Activated CD8-positive, alpha-beta memory T cell treated with anti-CD3 and anti-CD28 coated beads, Interleukin-2, amount 10 ng/mL, durations not matched to agents 7 days and 5 days (primary cell): ENCODE measurements at regions of chr19 and their contacts with region 1.

Region 1: GRCh38 chr19:14366498-14366915 is 14.7 kb upstream of the ADGRE5 start:
- DNase-seq: peak; percentile 93
- ATAC-seq: peak; percentile 37
- H3K4me3 Mint-ChIP-seq: peak overlapping the region; percentile 12
- H3K27ac Mint-ChIP-seq: peak overlapping the region; percentile 89
- H3K4me1 Mint-ChIP-seq: peaks cover 74% of the 10 kb centered on the region
- H3K27me3 Mint-ChIP-seq: no peaks in the 10 kb centered on the region

Region 2: GRCh38 chr19:14265290-14266036 is 101.0 kb before region 1 on chr19:
- CTCF ChIA-PET with region 1: no interaction called
- DNase-seq: no peak
- ATAC-seq: no peak
- H3K4me3 Mint-ChIP-seq: no peak overlapping the region
- H3K27ac Mint-ChIP-seq: no peak overlapping the region
- H3K4me1 Mint-ChIP-seq: no peaks in the 10 kb centered on the region
- H3K27me3 Mint-ChIP-seq: no peaks in the 10 kb centered on the region

Region 3: GRCh38 chr19:14383661-14384555 is 17.4 kb after region 1 on chr19:
- CTCF ChIA-PET with region 1: interaction called, 72 read pairs
- DNase-seq: peak; percentile 83
- ATAC-seq: peak; percentile 25
- H3K4me3 Mint-ChIP-seq: peak overlapping the region; percentile 98
- H3K27ac Mint-ChIP-seq: peak overlapping the region; percentile 97
- H3K4me1 Mint-ChIP-seq: peaks cover 38% of the 10 kb centered on the region
- H3K27me3 Mint-ChIP-seq: no peaks in the 10 kb centered on the region

Region 4: DNA sequence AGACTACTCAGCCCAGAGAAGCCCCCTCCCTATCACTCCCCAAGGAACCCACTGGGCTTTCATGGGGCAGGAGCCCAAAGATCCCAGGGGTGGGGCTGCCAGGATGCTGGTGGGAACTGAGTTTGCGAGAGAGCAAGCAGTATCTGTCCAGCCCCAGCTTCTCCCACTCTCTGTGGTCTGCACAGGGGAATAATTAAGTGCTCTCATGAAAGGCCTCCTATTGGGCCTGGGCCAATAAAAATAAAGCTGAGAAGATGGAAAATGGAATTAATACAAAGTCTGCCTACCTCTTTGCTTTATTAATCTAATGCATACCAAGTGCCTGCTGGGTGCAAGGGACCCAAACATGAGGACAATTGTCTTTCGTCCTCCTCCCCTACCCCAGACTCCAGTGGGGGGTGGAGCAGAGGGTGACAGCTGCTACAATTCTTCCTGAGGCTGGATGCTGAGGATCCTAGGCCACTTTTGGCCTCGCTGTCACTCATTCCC is 47.2 kb after region 1 on chr19:
- CTCF ChIA-PET with region 1: interaction called, 211 read pairs
- DNase-seq: no peak
- ATAC-seq: no peak
- H3K4me3 Mint-ChIP-seq: no peak overlapping the region
- H3K27ac Mint-ChIP-seq: peak overlapping the region; percentile 13
- H3K4me1 Mint-ChIP-seq: peaks cover 73% of the 10 kb centered on the region
- H3K27me3 Mint-ChIP-seq: no peaks in the 10 kb centered on the region